CD4-positive, alpha-beta memory T cell (primary cell): ENCODE measurements at regions of chr18 and their contacts with region 1.

Region 1: DNA sequence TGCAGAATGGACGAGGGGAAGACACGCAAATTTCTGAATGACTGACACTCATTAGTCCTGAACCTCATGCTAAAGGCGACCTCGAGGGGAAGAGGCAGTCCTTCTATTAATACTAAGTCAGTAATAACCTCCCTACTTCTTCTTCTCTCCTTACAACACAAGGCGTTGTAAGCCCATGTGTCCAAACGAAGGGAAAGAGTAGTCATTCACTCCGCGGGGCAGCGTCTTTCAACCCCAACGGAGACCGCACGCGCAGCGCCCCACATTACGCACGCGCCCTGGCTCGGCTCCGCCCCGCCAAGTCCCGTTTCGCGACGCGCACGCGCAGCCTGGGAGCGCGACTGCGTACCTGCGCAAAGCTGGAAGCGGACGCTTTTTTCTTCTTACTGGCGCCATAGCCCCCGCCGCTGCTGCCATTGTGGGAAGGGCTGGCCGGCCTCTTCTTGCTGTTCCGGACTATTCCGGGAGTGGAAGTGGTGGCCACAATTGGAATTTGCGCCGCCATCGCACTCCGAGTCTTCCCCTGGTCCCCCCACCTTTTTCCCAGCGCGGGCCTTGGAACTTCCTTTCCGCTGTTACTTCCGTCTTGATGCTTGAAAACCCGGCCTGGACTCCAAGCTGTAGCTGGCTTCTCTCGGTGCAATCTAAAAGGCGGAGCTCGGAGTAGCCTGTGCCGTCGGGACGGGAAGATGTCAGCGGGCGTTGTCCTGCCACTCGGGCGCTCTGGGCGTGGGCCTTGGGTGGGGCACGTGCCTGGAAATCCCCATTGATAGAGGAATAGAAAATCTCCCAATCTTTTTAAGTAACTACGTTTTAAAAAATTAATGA is at the start of gene INO80C:
- DNase-seq: peak; percentile 92 to 94 (median 93)
- H3K4me3 ChIP-seq: peak within 1 kb of the TSS; percentile 94 to 96
- H3K4me3 Mint-ChIP-seq: peak within 1 kb of the TSS; percentile 95 to 99 (median 96)
- H3K27ac ChIP-seq: peak within 1 kb of the TSS; percentile 84
- H3K27ac Mint-ChIP-seq: peak within 1 kb of the TSS; percentile 98 to 100 (median 100)
- H3K4me1 ChIP-seq: peaks cover 23% of the 10 kb centered on the region
- H3K4me1 Mint-ChIP-seq: peaks cover 14 to 39% (median 28%) of the 10 kb centered on the region in 4 donors
- H3K27me3 ChIP-seq: no peaks in the 10 kb centered on the region
- H3K27me3 Mint-ChIP-seq: no peaks in the 10 kb centered on the region
- total RNA-seq, gene INO80C: 27.3 to 30.3 TPM

Region 2: GRCh38 chr18:34867520-34867919 is 630.1 kb before region 1 on chr18:
- CTCF ChIA-PET with region 1: no interaction called
- POLR2A ChIA-PET with region 1: no interaction called
- intact Hi-C with region 1: loop called (anchors 10 kb)
- DNase-seq: no peak
- H3K4me3 ChIP-seq: no peak overlapping the region
- H3K4me3 Mint-ChIP-seq: no peak overlapping the region
- H3K27ac ChIP-seq: no peak overlapping the region
- H3K27ac Mint-ChIP-seq: no peak overlapping the region
- H3K4me1 ChIP-seq: no peaks in the 10 kb centered on the region
- H3K4me1 Mint-ChIP-seq: peaks cover 0 to 3% (median under 1%) of the 10 kb centered on the region in 4 donors
- H3K27me3 ChIP-seq: no peaks in the 10 kb centered on the region
- H3K27me3 Mint-ChIP-seq: peaks cover 0 to 2% of the 10 kb centered on the region in 2 donors

Region 3: DNA sequence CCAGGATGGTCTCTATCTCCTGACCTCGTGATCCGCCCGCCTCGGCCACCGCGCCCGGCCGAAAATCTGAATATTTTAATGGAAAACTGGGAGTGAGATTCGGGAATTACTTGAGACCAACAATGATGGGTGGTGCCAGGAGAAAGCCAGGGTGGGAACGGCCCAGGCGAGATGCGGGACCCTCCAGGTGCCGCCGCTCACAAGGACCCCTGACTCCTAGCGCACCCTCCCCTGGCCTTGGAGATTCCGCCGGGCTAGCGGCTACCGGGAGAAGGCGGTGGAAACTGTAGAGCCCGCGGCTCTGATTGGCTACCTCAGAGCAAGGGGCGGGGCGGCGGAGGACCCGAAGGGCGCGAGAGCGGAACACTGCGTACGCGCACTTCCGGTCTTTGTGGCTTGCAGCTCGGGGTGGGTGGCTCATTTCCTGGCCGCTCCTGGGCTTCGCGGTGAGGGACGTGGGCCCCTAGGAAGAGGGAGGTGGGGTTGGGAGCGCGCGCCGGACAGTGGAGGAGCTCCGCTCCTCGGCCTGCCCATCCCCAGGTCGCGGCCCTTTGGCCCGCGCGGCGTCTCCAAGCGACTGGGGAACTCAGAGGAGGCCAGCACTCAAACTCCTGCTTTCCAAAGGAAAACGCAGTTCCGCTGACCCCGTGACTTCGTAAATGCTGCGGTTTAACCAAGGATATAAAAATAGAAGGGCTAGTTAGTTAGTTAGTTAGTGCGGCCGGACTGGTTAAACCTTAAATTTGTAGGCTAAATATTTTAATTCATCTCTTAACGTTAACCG is 256.7 kb before region 1 on chr18 and contains the start of gene ZNF397:
- CTCF ChIA-PET with region 1: no interaction called
- POLR2A ChIA-PET with region 1: interaction called, 12 read pairs
- intact Hi-C with region 1: loop called (anchors 1 kb)
- DNase-seq: peak; percentile 91 to 94 (median 92)
- H3K4me3 ChIP-seq: peak within 1 kb of the TSS; percentile 81 to 90
- H3K4me3 Mint-ChIP-seq: peak within 1 kb of the TSS; percentile 96 to 98 (median 96)
- H3K27ac ChIP-seq: peak within 1 kb of the TSS; percentile 95
- H3K27ac Mint-ChIP-seq: peak within 1 kb of the TSS; percentile 94 to 100 (median 99)
- H3K4me1 ChIP-seq: peaks cover 17% of the 10 kb centered on the region
- H3K4me1 Mint-ChIP-seq: peaks cover 10 to 40% (median 15%) of the 10 kb centered on the region in 4 donors
- H3K27me3 ChIP-seq: no peaks in the 10 kb centered on the region
- H3K27me3 Mint-ChIP-seq: no peaks in the 10 kb centered on the region
- total RNA-seq, gene ZNF397: 56.1 to 58.5 TPM

Region 4: DNA sequence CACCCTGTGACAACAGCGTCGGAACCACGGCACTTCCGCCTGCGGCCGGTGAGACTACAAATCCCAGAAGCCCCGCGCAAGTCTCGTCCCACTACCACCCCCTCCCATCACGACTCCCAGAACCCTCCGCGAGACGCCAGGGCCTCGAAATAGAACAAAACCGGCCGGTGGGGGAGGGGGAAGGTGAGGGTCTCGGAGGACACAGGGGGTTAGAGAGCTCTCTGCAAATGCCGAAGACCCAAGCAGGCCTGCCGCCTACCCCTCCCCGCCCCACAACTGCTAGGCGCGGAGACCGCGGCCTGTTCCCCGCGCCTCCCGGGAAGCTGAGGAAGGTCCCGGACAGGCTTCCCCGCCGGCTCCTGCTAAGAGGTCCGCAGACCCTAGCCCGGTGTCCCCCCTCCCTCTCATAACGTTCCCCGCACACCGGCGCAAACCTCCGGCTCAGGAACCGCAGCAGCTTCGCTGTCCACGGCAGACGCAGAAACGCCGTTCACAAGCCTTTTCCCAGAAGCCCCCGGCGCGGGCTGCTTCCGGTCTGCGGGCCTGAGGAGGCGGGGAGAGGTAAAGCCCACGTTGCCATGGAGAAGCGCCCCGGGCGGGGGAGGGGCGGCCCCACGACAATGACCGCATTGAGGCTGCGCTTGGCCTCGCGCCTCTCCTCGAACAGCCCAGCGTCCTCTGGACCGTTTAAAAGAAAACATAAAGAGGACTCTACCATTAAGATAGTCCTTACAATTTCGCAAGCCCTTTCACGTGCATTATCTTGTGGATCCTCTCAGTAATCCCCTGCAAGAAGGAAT is 153.4 kb before region 1 on chr18 and contains the start of gene ZNF24:
- CTCF ChIA-PET with region 1: no interaction called
- POLR2A ChIA-PET with region 1: interaction called, 10 read pairs
- intact Hi-C with region 1: loop called (anchors 1 kb)
- DNase-seq: peak; percentile 89 to 95 (median 89)
- H3K4me3 ChIP-seq: peak within 1 kb of the TSS; percentile 87 to 96
- H3K4me3 Mint-ChIP-seq: peak within 1 kb of the TSS; percentile 94 to 99 (median 98)
- H3K27ac ChIP-seq: peak within 1 kb of the TSS; percentile 99
- H3K27ac Mint-ChIP-seq: peak within 1 kb of the TSS; percentile 96 to 99 (median 98)
- H3K4me1 ChIP-seq: peaks cover 45% of the 10 kb centered on the region
- H3K4me1 Mint-ChIP-seq: peaks cover 32 to 58% (median 44%) of the 10 kb centered on the region in 4 donors
- H3K27me3 ChIP-seq: no peaks in the 10 kb centered on the region
- H3K27me3 Mint-ChIP-seq: no peaks in the 10 kb centered on the region
- total RNA-seq, gene ZNF24: 89.1 to 90.5 TPM

Region 5: GRCh38 chr18:35580701-35581539 is 83.3 kb after region 1 on chr18:
- CTCF ChIA-PET with region 1: no interaction called
- POLR2A ChIA-PET with region 1: interaction called, 15 read pairs
- intact Hi-C with region 1: loop called (anchors 1 kb)
- DNase-seq: peak; percentile 52 to 69 (median 64)
- H3K4me3 ChIP-seq: peak overlapping the region in 1 of 2 donors; percentile 49
- H3K4me3 Mint-ChIP-seq: peak overlapping the region; percentile 61 to 82 (median 76)
- H3K27ac ChIP-seq: peak overlapping the region; percentile 59
- H3K27ac Mint-ChIP-seq: no peak overlapping the region
- H3K4me1 ChIP-seq: peaks cover 18% of the 10 kb centered on the region
- H3K4me1 Mint-ChIP-seq: peaks cover 18 to 30% (median 20%) of the 10 kb centered on the region in 4 donors
- H3K27me3 ChIP-seq: no peaks in the 10 kb centered on the region
- H3K27me3 Mint-ChIP-seq: peaks cover 2 to 5% of the 10 kb centered on the region in 2 donors

Region 6: GRCh38 chr18:36067055-36067957 is 569.7 kb after region 1 on chr18 and contains the start of gene RPRD1A:
- CTCF ChIA-PET with region 1: no interaction called
- POLR2A ChIA-PET with region 1: interaction called, 3 read pairs
- intact Hi-C with region 1: loop called (anchors 2 kb)
- DNase-seq: peak; percentile 94 to 97 (median 94)
- H3K4me3 ChIP-seq: peak within 1 kb of the TSS; percentile 81 to 87
- H3K4me3 Mint-ChIP-seq: peak within 1 kb of the TSS; percentile 92 to 98 (median 95)
- H3K27ac ChIP-seq: peak within 1 kb of the TSS; percentile 74
- H3K27ac Mint-ChIP-seq: peak within 1 kb of the TSS; percentile 89 to 98 (median 96)
- H3K4me1 ChIP-seq: peaks cover 32% of the 10 kb centered on the region
- H3K4me1 Mint-ChIP-seq: peaks cover 31 to 48% (median 40%) of the 10 kb centered on the region in 4 donors
- H3K27me3 ChIP-seq: no peaks in the 10 kb centered on the region
- H3K27me3 Mint-ChIP-seq: peaks cover 0 to 1% of the 10 kb centered on the region in 2 donors
- total RNA-seq, gene RPRD1A: 40.1 to 42.3 TPM